ENCODE measurements at regions of chr1 and their contacts with region 1.

Region 1: GRCh38 chr1:212070720-212071302 is 35.3 kb downstream of the DTL start:
- DNase-seq: no peak
- ATAC-seq: peak; percentile 68
- H3K4me3 ChIP-seq: no peak overlapping the region
- H3K27ac ChIP-seq: no peak overlapping the region
- H3K4me1 ChIP-seq: no peaks in the 10 kb centered on the region
- H3K27me3 ChIP-seq: no peaks in the 10 kb centered on the region

Region 2: DNA sequence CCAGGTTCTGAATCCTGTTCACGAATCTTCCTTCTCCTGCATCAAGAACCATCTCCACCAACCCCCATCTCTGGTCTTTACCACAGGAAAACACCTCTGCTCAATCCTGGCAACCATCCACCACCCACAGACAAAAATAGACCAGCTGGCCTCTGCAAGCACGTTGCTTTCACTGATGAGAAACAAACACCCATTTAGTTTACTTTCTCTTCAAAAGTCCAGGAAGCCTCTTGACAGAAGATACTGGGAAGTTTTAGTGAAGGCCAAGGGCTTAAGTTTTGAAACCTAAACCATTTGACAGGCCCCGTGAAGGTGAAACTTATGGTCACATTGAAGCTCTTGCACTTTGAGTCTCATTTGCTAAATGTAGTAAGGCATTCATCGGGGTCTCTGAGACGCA is 91.8 kb after region 1 on chr1:
- intact Hi-C with region 1: loop called in 1 of 4 experiments (anchors 10 kb)
- DNase-seq: peak; percentile 22 to 63 (median 53)
- ATAC-seq: peak; percentile 61
- H3K4me3 ChIP-seq: no peak overlapping the region
- H3K27ac ChIP-seq: no peak overlapping the region
- H3K4me1 ChIP-seq: peaks cover 6% of the 10 kb centered on the region
- H3K27me3 ChIP-seq: no peaks in the 10 kb centered on the region

Region 3: GRCh38 chr1:212284744-212285684 is 214.2 kb after region 1 on chr1 and contains the start of gene PPP2R5A:
- intact Hi-C with region 1: loop called (anchors 5 to 10 kb)
- DNase-seq: peak; percentile 99 to 100 (median 100)
- ATAC-seq: peak; percentile 98
- H3K4me3 ChIP-seq: peak within 1 kb of the TSS; percentile 94
- H3K27ac ChIP-seq: peak within 1 kb of the TSS; percentile 99
- H3K4me1 ChIP-seq: peaks cover 2% of the 10 kb centered on the region
- H3K27me3 ChIP-seq: no peaks in the 10 kb centered on the region
- total RNA-seq, gene PPP2R5A: 58.4 to 72.0 (median 61.3) TPM

Region 4: GRCh38 chr1:212291505-212292134 is 220.8 kb after region 1 on chr1:
- intact Hi-C with region 1: loop called (anchors 5 to 10 kb)
- DNase-seq: no peak
- ATAC-seq: peak; percentile 61 to 66
- H3K4me3 ChIP-seq: peak overlapping the region; percentile 3
- H3K27ac ChIP-seq: no peak overlapping the region
- H3K4me1 ChIP-seq: peaks cover 11% of the 10 kb centered on the region
- H3K27me3 ChIP-seq: no peaks in the 10 kb centered on the region

Region 5: DNA sequence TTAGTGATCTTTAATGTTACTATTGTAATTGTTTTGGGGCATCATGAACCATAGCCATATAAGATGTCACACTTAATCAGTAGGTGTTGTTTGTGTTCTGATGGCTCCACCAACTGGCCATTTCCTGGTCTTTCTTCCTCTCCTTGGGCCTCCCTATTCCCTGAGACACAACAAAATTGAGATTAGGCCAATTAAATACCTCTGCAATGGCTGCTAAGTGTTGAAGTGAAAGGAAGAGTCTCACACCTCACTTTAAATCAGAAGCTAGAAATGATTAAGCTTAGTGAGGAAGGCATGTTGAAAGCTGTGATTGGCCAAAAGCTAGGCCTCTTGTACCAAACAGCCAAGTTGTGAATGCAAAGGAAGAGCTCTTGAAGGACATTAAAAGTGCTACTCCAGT is 245.1 kb after region 1 on chr1:
- intact Hi-C with region 1: loop called in 1 of 4 experiments (anchors 10 kb)
- DNase-seq: no peak
- ATAC-seq: peak; percentile 49 to 60
- H3K4me3 ChIP-seq: no peak overlapping the region
- H3K27ac ChIP-seq: peak overlapping the region; percentile 52
- H3K4me1 ChIP-seq: no peaks in the 10 kb centered on the region
- H3K27me3 ChIP-seq: no peaks in the 10 kb centered on the region

Region 6: GRCh38 chr1:212368073-212368484 is 297.3 kb after region 1 on chr1:
- intact Hi-C with region 1: loop called in 3 of 4 experiments (anchors 5 kb)
- DNase-seq: peak in 1 of 3 donors; percentile 35
- ATAC-seq: peak; percentile 75 to 88
- H3K4me3 ChIP-seq: no peak overlapping the region
- H3K27ac ChIP-seq: no peak overlapping the region
- H3K4me1 ChIP-seq: no peaks in the 10 kb centered on the region
- H3K27me3 ChIP-seq: no peaks in the 10 kb centered on the region

Region 7: GRCh38 chr1:212455803-212456528 is 385.2 kb after region 1 on chr1:
- intact Hi-C with region 1: loop called in 3 of 4 experiments (anchors 2 to 5 kb)
- DNase-seq: peak; percentile 82 to 94 (median 94)
- ATAC-seq: peak; percentile 75 to 78
- H3K4me3 ChIP-seq: no peak overlapping the region
- H3K27ac ChIP-seq: peak overlapping the region; percentile 69
- H3K4me1 ChIP-seq: peaks cover 3% of the 10 kb centered on the region
- H3K27me3 ChIP-seq: no peaks in the 10 kb centered on the region